ENCODE measurements at regions of chr20 and their contacts with region 1.

Region 1: GRCh38 chr20:23187751-23188150 is 101.6 kb upstream of the CD93 start:
- DNase-seq: no peak
- H3K4me3 ChIP-seq: no peak overlapping the region
- H3K27ac ChIP-seq: no peak overlapping the region
- H3K4me1 ChIP-seq: no peaks in the 10 kb centered on the region
- H3K27me3 ChIP-seq: no peaks in the 10 kb centered on the region
- CTCF ChIP-seq: peak in 1 of 3 experiments; percentile 22

Region 2: GRCh38 chr20:23048283-23049200 is 139.2 kb before region 1 on chr20:
- dilution Hi-C with region 1: loop called (anchors 25 kb)
- DNase-seq: no peak
- H3K4me3 ChIP-seq: peak overlapping the region; percentile 46 to 72 (median 66)
- H3K27ac ChIP-seq: peak overlapping the region; percentile 64
- H3K4me1 ChIP-seq: peaks cover 19% of the 10 kb centered on the region
- H3K27me3 ChIP-seq: no peaks in the 10 kb centered on the region
- CTCF ChIP-seq: peak; percentile 43 to 79 (median 76)

Region 3: DNA sequence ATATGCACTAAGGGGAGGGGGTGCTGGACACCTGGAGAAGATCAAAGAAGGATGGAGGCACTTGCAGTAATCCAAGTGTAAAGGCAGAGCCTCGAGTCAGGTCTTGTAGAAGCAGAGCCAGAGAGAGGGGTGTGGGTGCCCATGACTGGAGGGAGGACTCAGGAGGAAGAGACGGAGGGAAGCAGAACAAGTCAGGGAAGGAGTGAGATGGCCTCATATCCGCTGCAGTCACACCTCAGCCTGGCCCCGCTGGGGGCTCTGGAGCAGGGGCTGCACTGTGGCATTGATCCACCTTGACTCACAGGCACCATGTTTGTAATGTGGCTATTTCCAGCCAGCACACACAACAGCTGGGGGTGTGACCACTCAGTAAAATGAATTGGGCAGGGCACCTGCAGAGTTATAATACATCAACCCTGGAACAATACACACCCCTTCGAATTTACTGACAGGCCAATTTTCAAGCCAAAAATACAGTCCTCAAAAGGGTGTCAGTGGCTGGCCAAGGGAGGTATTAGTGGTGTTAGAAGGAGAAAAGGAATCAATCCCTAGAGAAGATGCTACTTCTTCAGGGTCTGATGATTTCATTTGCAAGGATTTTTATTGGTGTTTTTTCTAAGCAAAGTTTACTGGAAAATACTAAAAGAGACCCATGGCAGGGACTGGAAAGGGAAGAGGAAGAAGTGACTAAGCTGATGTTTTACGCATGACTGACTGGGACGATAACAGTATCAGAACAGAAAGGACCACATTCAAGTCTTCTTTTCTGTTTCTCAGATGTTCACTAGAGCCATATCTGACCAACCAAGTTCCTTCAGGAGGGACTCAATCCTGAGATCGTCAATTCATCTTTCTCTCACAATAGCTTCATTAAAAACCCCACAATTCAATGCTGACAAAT is 143.9 kb after region 1 on chr20:
- dilution Hi-C with region 1: no loop called
- DNase-seq: no peak
- H3K4me3 ChIP-seq: no peak overlapping the region
- H3K27ac ChIP-seq: no peak overlapping the region
- H3K4me1 ChIP-seq: no peaks in the 10 kb centered on the region
- H3K27me3 ChIP-seq: no peaks in the 10 kb centered on the region
- CTCF ChIP-seq: no peak